B cell (primary cell): ENCODE measurements at regions of chr5 and their contacts with region 1.

Region 1: GRCh38 chr5:40688127-40688761 is 8.5 kb downstream of the PTGER4 start:
- DNase-seq: peak; percentile 91
- ATAC-seq: peak; percentile 90
- H3K4me3 ChIP-seq: no peak overlapping the region
- H3K4me3 Mint-ChIP-seq: peak overlapping the region; percentile 9
- H3K27ac ChIP-seq: no peak overlapping the region
- H3K27ac Mint-ChIP-seq: peak overlapping the region; percentile 5
- H3K4me1 ChIP-seq: peaks cover 17 to 30% of the 10 kb centered on the region in 2 donors
- H3K4me1 Mint-ChIP-seq: peaks cover 53% of the 10 kb centered on the region
- H3K27me3 ChIP-seq: no peaks in the 10 kb centered on the region
- H3K27me3 Mint-ChIP-seq: no peaks in the 10 kb centered on the region
- CTCF ChIP-seq: peak; percentile 87

Region 2: DNA sequence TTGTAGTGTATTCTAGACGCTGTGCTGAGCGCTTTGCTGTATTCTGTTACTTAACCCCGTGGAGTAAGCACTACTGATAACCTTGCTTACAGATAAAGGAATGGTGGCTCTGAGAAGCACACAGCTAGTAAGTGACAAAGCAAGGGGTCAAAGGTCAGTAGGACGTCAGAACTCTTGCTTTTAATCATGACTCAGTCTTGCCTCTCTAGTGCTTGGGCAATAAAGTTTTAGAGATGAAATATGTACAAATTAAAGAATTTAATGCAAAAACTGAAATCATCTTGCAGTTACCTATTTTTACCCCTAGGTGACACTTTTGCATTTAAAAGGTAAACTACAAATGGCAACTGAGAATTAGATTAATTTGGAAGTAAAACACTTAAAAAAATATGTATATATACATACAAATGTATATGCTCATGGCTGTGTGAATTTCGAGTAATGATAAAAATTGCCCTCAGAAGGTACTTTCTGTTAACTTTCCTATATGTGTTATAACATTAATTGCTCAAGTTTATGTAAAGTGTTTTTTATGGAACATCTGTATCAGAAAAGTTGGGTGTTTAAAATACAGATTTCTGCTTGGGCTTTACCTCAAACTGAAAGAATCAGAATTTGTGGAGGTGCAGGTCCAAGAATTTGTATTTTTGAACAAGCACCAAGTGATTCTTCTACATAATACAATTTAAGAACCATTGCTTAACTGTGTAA is 1088.4 kb before region 1 on chr5:
- CTCF ChIA-PET with region 1: interaction called, 3 read pairs
- POLR2A ChIA-PET with region 1: no interaction called
- intact Hi-C with region 1: loop called (anchors 2 kb)
- DNase-seq: no peak
- ATAC-seq: no peak
- H3K4me3 ChIP-seq: no peak overlapping the region
- H3K4me3 Mint-ChIP-seq: no peak overlapping the region
- H3K27ac ChIP-seq: no peak overlapping the region
- H3K27ac Mint-ChIP-seq: no peak overlapping the region
- H3K4me1 ChIP-seq: no peaks in the 10 kb centered on the region
- H3K4me1 Mint-ChIP-seq: no peaks in the 10 kb centered on the region
- H3K27me3 ChIP-seq: peaks cover 0 to 6% (median 2%) of the 10 kb centered on the region in 4 experiments
- H3K27me3 Mint-ChIP-seq: peaks cover 22% of the 10 kb centered on the region
- CTCF ChIP-seq: peak; percentile 74

Region 3: GRCh38 chr5:39948867-39949468 is 739.3 kb before region 1 on chr5:
- CTCF ChIA-PET with region 1: interaction called, 63 read pairs
- POLR2A ChIA-PET with region 1: no interaction called
- intact Hi-C with region 1: loop called (anchors 1 kb)
- DNase-seq: peak; percentile 82
- ATAC-seq: peak; percentile 80
- H3K4me3 ChIP-seq: no peak overlapping the region
- H3K4me3 Mint-ChIP-seq: no peak overlapping the region
- H3K27ac ChIP-seq: no peak overlapping the region
- H3K27ac Mint-ChIP-seq: no peak overlapping the region
- H3K4me1 ChIP-seq: no peaks in the 10 kb centered on the region
- H3K4me1 Mint-ChIP-seq: peaks cover 2% of the 10 kb centered on the region
- H3K27me3 ChIP-seq: no peaks in the 10 kb centered on the region
- H3K27me3 Mint-ChIP-seq: no peaks in the 10 kb centered on the region
- CTCF ChIP-seq: peak; percentile 81

Region 4: DNA sequence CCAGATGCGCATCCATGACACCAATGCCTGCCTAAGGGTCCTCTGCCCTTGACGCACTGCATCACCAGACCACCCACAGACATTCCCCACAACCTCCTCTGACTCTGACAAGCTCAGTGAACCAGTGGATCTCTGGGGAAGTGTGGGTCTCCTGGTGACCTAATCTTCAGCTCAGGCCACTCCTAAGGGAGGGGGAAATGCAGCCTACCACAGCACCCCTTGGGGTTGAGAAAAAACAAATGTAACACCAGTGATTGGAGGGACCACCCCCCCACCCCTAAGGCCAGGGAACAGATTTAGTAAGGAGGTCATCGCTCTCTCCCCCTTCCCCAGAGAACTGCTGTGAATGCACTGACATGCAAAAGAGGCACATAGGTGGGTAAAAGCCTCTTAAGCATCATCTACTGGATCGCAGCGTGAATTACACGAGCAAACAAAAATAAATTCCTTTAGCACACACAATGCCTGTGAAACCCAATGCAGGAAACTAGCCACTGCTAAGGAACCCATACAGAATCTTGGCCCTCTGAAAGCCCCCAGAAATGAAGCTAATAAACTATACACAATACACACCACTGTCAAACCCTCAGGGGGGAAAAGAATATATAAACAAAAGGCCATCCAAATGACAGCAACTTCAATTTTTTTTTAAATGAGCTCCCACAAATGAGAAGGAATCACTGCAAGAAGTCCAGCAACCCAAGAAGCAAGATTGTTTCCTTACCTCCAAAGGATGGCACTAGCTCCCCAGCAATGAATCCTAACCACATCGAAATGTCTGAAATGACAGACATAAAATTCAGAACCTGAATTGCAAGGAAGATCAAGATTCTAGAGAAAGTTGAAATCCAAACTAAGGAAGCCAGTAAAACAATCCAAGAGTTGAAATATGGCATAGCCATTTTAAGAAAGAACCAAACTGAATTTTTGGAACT is 522.2 kb before region 1 on chr5:
- CTCF ChIA-PET with region 1: interaction called, 7 read pairs
- POLR2A ChIA-PET with region 1: no interaction called
- intact Hi-C with region 1: loop called (anchors 1 kb)
- DNase-seq: no peak
- ATAC-seq: no peak
- H3K4me3 ChIP-seq: no peak overlapping the region
- H3K4me3 Mint-ChIP-seq: no peak overlapping the region
- H3K27ac ChIP-seq: no peak overlapping the region
- H3K27ac Mint-ChIP-seq: no peak overlapping the region
- H3K4me1 ChIP-seq: no peaks in the 10 kb centered on the region
- H3K4me1 Mint-ChIP-seq: no peaks in the 10 kb centered on the region
- H3K27me3 ChIP-seq: no peaks in the 10 kb centered on the region
- H3K27me3 Mint-ChIP-seq: peaks cover under 1% of the 10 kb centered on the region
- CTCF ChIP-seq: no peak

Region 5: GRCh38 chr5:40367255-40367654 is 321.0 kb before region 1 on chr5:
- CTCF ChIA-PET with region 1: interaction called, 14 read pairs
- POLR2A ChIA-PET with region 1: no interaction called
- intact Hi-C with region 1: loop called (anchors 1 kb)
- DNase-seq: peak; percentile 45
- ATAC-seq: no peak
- H3K4me3 ChIP-seq: no peak overlapping the region
- H3K4me3 Mint-ChIP-seq: no peak overlapping the region
- H3K27ac ChIP-seq: no peak overlapping the region
- H3K27ac Mint-ChIP-seq: peak overlapping the region; percentile 23
- H3K4me1 ChIP-seq: peaks cover 3 to 4% of the 10 kb centered on the region in 2 donors
- H3K4me1 Mint-ChIP-seq: peaks cover 11% of the 10 kb centered on the region
- H3K27me3 ChIP-seq: no peaks in the 10 kb centered on the region
- H3K27me3 Mint-ChIP-seq: no peaks in the 10 kb centered on the region
- CTCF ChIP-seq: no peak

Region 6: DNA sequence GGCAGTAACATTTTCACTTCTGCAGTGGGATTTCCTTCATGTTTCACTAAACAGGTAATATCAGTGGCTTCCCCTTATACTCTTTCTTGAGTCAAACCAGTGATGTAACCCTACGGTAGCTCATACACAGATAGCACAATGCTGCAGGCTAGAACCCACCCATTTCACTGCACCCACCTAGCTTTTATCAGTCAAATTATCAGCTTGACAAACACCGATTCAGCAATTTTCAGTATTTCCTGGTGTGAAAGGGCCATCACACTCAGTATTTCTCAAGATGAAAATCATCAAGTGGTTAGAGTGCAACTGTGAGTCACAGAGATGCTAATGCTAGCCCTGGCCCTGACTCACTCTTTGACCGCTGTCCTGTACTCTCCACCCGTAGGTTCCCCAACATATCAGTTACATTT is 250.8 kb before region 1 on chr5:
- CTCF ChIA-PET with region 1: no interaction called
- POLR2A ChIA-PET with region 1: no interaction called
- intact Hi-C with region 1: loop called (anchors 2 kb)
- DNase-seq: peak; percentile 41
- ATAC-seq: peak; percentile 66
- H3K4me3 ChIP-seq: no peak overlapping the region
- H3K4me3 Mint-ChIP-seq: peak overlapping the region; percentile 46
- H3K27ac ChIP-seq: no peak overlapping the region
- H3K27ac Mint-ChIP-seq: peak overlapping the region; percentile 21
- H3K4me1 ChIP-seq: peaks cover 28 to 35% of the 10 kb centered on the region in 2 donors
- H3K4me1 Mint-ChIP-seq: peaks cover 40% of the 10 kb centered on the region
- H3K27me3 ChIP-seq: no peaks in the 10 kb centered on the region
- H3K27me3 Mint-ChIP-seq: no peaks in the 10 kb centered on the region
- CTCF ChIP-seq: no peak